Activated CD4-positive, alpha-beta memory T cell treated with anti-CD3 and anti-CD28 coated beads for 36 hours (primary cell): ENCODE measurements at regions of chr2 and their contacts with region 1.

Region 1: GRCh38 chr2:169573160-169573973 is at the start of gene FASTKD1:
- DNase-seq: peak; percentile 93
- H3K4me3 Mint-ChIP-seq: peak within 1 kb of the TSS; percentile 100
- H3K27ac Mint-ChIP-seq: peak within 1 kb of the TSS; percentile 89
- H3K4me1 Mint-ChIP-seq: peaks cover 25% of the 10 kb centered on the region
- H3K27me3 Mint-ChIP-seq: no peaks in the 10 kb centered on the region
- total RNA-seq, gene FASTKD1: 41.6 to 47.6 TPM

Region 2: GRCh38 chr2:169479257-169480078 is 93.9 kb before region 1 on chr2 and contains the start of gene BBS5:
- CTCF ChIA-PET with region 1: interaction called, 5 read pairs
- POLR2A ChIA-PET with region 1: interaction called, 5 read pairs
- intact Hi-C with region 1: loop called (anchors 5 kb)
- DNase-seq: peak; percentile 87
- H3K4me3 Mint-ChIP-seq: peak within 1 kb of the TSS; percentile 87
- H3K27ac Mint-ChIP-seq: no peak within 1 kb of the TSS
- H3K4me1 Mint-ChIP-seq: peaks cover 13% of the 10 kb centered on the region
- H3K27me3 Mint-ChIP-seq: no peaks in the 10 kb centered on the region
- total RNA-seq, gene BBS5: 2.4 to 3.4 TPM

Region 3: DNA sequence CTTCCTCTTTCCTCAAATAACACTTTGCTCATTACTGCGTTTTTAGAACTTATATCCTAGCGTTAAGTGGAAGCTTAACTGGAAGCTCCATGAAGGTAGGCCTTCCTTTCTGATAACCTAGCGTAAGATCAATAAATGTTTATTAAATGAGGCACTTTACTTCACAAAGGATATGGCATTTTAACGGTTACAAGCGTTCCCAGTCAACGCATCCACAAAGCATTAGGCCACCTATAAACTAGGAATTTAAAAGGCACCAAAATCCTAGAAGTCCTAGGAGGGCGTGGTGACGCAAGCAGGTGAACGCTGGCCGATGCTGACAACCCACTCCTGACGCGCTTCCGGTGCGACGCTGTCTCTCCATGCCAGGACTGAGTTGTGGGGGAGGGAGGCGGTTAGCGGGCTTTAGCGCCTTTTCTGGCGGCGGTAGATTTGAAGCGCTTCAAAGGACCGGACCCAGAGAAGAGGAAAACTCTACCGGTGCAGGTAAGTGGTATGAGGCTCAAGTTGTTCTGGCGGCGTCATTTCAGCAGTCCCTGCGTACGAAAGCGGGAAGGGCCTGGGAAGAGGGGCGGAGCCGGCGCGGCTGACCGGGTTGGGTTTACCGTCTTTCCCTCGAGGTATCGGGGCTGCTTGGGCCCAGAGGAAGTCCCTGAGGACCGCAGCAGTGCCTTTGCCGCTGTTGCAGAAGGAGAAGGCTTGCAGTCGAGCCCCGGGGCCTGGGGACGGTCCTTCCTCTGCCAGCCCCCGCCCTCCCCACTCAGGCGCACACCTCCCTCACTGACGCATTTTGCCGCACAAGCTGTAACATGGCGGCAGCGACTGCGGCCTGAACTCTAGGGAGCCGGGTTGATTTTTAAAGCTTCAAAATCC is 10.9 kb after region 1 on chr2 and contains the start of gene PPIG:
- CTCF ChIA-PET with region 1: interaction called, 4 read pairs
- POLR2A ChIA-PET with region 1: interaction called, 17 read pairs
- intact Hi-C with region 1: loop called (anchors 1 kb)
- DNase-seq: peak; percentile 93
- H3K4me3 Mint-ChIP-seq: peak within 1 kb of the TSS; percentile 99
- H3K27ac Mint-ChIP-seq: peak within 1 kb of the TSS; percentile 98
- H3K4me1 Mint-ChIP-seq: peaks cover 27% of the 10 kb centered on the region
- H3K27me3 Mint-ChIP-seq: no peaks in the 10 kb centered on the region
- total RNA-seq, gene PPIG: 52.3 to 55.3 TPM